ENCODE measurements at regions of chr12 and their contacts with region 1.

Region 1: DNA sequence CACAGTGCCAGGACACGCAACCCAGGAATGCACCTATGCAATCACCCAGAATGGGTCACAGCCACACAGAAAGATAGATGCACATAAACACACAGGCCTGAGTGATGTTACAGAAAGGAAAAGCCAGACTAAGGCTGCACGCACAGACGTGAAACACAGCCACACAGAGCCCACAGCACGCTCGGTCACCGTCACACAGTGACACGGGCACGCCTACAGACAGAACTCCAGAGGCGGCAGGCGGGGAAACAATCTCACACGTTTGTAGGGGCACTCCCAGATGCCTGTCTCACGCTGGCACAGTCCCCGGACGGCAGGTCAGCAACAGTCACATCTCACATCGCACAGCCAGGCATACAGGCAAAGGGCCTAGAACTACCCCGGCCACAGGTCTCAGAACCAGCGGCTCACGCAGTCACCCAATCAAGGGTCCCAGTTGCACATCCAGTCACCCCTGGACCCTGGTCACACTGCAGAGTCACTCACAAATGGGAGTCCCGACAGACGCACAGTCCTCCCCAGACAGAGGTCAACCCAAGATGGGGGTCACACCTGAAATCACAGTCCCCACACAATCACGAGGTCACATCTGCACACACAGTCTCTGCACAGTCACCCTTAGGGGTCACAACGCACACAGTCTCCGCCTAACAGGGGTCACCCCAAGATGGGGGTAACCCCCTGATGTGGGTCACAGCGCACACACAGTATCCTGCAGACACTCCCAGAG is 790 bp downstream of the SSH1 start:
- DNase-seq: peak; percentile 35 to 77 (median 54)
- ATAC-seq: peak; percentile 68
- H3K4me3 ChIP-seq: peak overlapping the region; percentile 84
- H3K4me3 Mint-ChIP-seq: peak overlapping the region; percentile 89 to 97 (median 94)
- H3K27ac ChIP-seq: peak overlapping the region; percentile 62
- H3K27ac Mint-ChIP-seq: peak overlapping the region; percentile 76 to 99 (median 92)
- H3K4me1 ChIP-seq: peaks cover 18 to 23% of the 10 kb centered on the region in 2 donors
- H3K4me1 Mint-ChIP-seq: peaks cover 26 to 56% (median 47%) of the 10 kb centered on the region in 7 donors
- H3K27me3 ChIP-seq: no peaks in the 10 kb centered on the region
- H3K27me3 Mint-ChIP-seq: peaks cover 0 to 2% (median 0%) of the 10 kb centered on the region in 5 donors

Region 2: GRCh38 chr12:108618079-108618952 is 238.3 kb before region 1 on chr12:
- CTCF ChIA-PET with region 1: no interaction called
- POLR2A ChIA-PET with region 1: no interaction called
- intact Hi-C with region 1: loop called in 1 of 2 experiments (anchors 5 kb)
- DNase-seq: peak; percentile 61 to 81 (median 74)
- ATAC-seq: peak; percentile 72
- H3K4me3 ChIP-seq: no peak overlapping the region
- H3K4me3 Mint-ChIP-seq: peak overlapping the region in 8 of 10 donors; percentile 13 to 54 (median 34)
- H3K27ac ChIP-seq: peak overlapping the region; percentile 65
- H3K27ac Mint-ChIP-seq: peak overlapping the region; percentile 67 to 92 (median 79)
- H3K4me1 ChIP-seq: peaks cover 34 to 42% of the 10 kb centered on the region in 2 donors
- H3K4me1 Mint-ChIP-seq: peaks cover 44 to 72% (median 64%) of the 10 kb centered on the region in 7 donors
- H3K27me3 ChIP-seq: no peaks in the 10 kb centered on the region
- H3K27me3 Mint-ChIP-seq: no peaks in the 10 kb centered on the region

Region 3: GRCh38 chr12:108838194-108839017 is 18.2 kb before region 1 on chr12:
- CTCF ChIA-PET with region 1: interaction called, 3 read pairs
- POLR2A ChIA-PET with region 1: interaction called, 8 read pairs
- intact Hi-C with region 1: loop called (anchors 1 to 2 kb)
- DNase-seq: peak in 2 of 9 donors; percentile 32 to 73
- ATAC-seq: peak; percentile 93
- H3K4me3 ChIP-seq: no peak overlapping the region
- H3K4me3 Mint-ChIP-seq: peak overlapping the region in 9 of 10 donors; percentile 16 to 76 (median 50)
- H3K27ac ChIP-seq: peak overlapping the region; percentile 10
- H3K27ac Mint-ChIP-seq: peak overlapping the region; percentile 9 to 90 (median 63)
- H3K4me1 ChIP-seq: peaks cover 18% of the 10 kb centered on the region in 2 donors
- H3K4me1 Mint-ChIP-seq: peaks cover 17 to 63% (median 30%) of the 10 kb centered on the region in 7 donors
- H3K27me3 ChIP-seq: no peaks in the 10 kb centered on the region
- H3K27me3 Mint-ChIP-seq: no peaks in the 10 kb centered on the region

Region 4: GRCh38 chr12:109052414-109053323 is 196.1 kb after region 1 on chr12 and contains the start of gene USP30:
- CTCF ChIA-PET with region 1: no interaction called
- POLR2A ChIA-PET with region 1: interaction called, 4 read pairs
- intact Hi-C with region 1: loop called (anchors 1 kb)
- DNase-seq: peak; percentile 68 to 86 (median 77)
- ATAC-seq: peak; percentile 93
- H3K4me3 ChIP-seq: peak within 1 kb of the TSS; percentile 91
- H3K4me3 Mint-ChIP-seq: peak within 1 kb of the TSS; percentile 86 to 99 (median 96)
- H3K27ac ChIP-seq: peak within 1 kb of the TSS; percentile 89
- H3K27ac Mint-ChIP-seq: peak within 1 kb of the TSS; percentile 89 to 98 (median 95)
- H3K4me1 ChIP-seq: peaks cover 13% of the 10 kb centered on the region in 2 donors
- H3K4me1 Mint-ChIP-seq: peaks cover 14 to 27% (median 17%) of the 10 kb centered on the region in 7 donors
- H3K27me3 ChIP-seq: no peaks in the 10 kb centered on the region
- H3K27me3 Mint-ChIP-seq: no peaks in the 10 kb centered on the region
- total RNA-seq, gene USP30: 7.8 to 15.7 (median 12.9) TPM

Region 5: GRCh38 chr12:109650808-109651207 is 794.2 kb after region 1 on chr12:
- CTCF ChIA-PET with region 1: no interaction called
- POLR2A ChIA-PET with region 1: no interaction called
- intact Hi-C with region 1: no loop called
- DNase-seq: no peak
- ATAC-seq: no peak
- H3K4me3 ChIP-seq: no peak overlapping the region
- H3K4me3 Mint-ChIP-seq: no peak overlapping the region
- H3K27ac ChIP-seq: no peak overlapping the region
- H3K27ac Mint-ChIP-seq: no peak overlapping the region
- H3K4me1 ChIP-seq: no peaks in the 10 kb centered on the region
- H3K4me1 Mint-ChIP-seq: no peaks in the 10 kb centered on the region
- H3K27me3 ChIP-seq: no peaks in the 10 kb centered on the region
- H3K27me3 Mint-ChIP-seq: peaks cover 6 to 37% (median 21%) of the 10 kb centered on the region in 5 donors

Region 6: GRCh38 chr12:109713187-109713984 is 856.8 kb after region 1 on chr12 and contains the start of gene FAM222A:
- CTCF ChIA-PET with region 1: no interaction called
- POLR2A ChIA-PET with region 1: no interaction called
- intact Hi-C with region 1: loop called (anchors 5 to 10 kb)
- DNase-seq: peak; percentile 94 to 99 (median 98)
- ATAC-seq: peak; percentile 94
- H3K4me3 ChIP-seq: peak within 1 kb of the TSS; percentile 41
- H3K4me3 Mint-ChIP-seq: peak within 1 kb of the TSS; percentile 57 to 81 (median 72)
- H3K27ac ChIP-seq: peak within 1 kb of the TSS; percentile 55
- H3K27ac Mint-ChIP-seq: peak within 1 kb of the TSS in 1 of 9 donors; percentile 48
- H3K4me1 ChIP-seq: peaks cover 3 to 11% of the 10 kb centered on the region in 2 donors
- H3K4me1 Mint-ChIP-seq: peaks cover 0 to 4% (median 0%) of the 10 kb centered on the region in 7 donors
- H3K27me3 ChIP-seq: peaks cover 0 to 6% of the 10 kb centered on the region in 2 donors
- H3K27me3 Mint-ChIP-seq: peaks cover 29 to 65% (median 30%) of the 10 kb centered on the region in 5 donors
- total RNA-seq, gene FAM222A: 0.24 to 1.6 (median 0.80) TPM

Measured in naive thymus-derived CD4-positive, alpha-beta T cell (primary cell).